ENCODE measurements at regions of chr6 and their contacts with region 1.

Region 1: GRCh38 chr6:117840541-117840983 is 66.5 kb upstream of the SLC35F1 start:
- DNase-seq: no peak
- ATAC-seq: 0 out of 2 replicates have a peak, but pooled peaks have one; percentile 66
- H3K4me3 ChIP-seq: no peak overlapping the region
- H3K27ac ChIP-seq: no peak overlapping the region
- H3K4me1 ChIP-seq: no peaks in the 10 kb centered on the region
- H3K27me3 ChIP-seq: no peaks in the 10 kb centered on the region
- CTCF ChIP-seq: peak; percentile 57

Region 2: GRCh38 chr6:118263921-118264486 is 423.4 kb after region 1 on chr6:
- CTCF ChIA-PET with region 1: no interaction called
- POLR2A ChIA-PET with region 1: no interaction called
- in situ Hi-C with region 1: no loop called
- intact Hi-C with region 1: loop called (anchors 2 kb)
- DNase-seq: no peak
- ATAC-seq: 0 out of 2 replicates have a peak, but pooled peaks have one; percentile 81
- H3K4me3 ChIP-seq: no peak overlapping the region
- H3K27ac ChIP-seq: no peak overlapping the region
- H3K4me1 ChIP-seq: no peaks in the 10 kb centered on the region
- H3K27me3 ChIP-seq: no peaks in the 10 kb centered on the region
- CTCF ChIP-seq: peak; percentile 65

Region 3: DNA sequence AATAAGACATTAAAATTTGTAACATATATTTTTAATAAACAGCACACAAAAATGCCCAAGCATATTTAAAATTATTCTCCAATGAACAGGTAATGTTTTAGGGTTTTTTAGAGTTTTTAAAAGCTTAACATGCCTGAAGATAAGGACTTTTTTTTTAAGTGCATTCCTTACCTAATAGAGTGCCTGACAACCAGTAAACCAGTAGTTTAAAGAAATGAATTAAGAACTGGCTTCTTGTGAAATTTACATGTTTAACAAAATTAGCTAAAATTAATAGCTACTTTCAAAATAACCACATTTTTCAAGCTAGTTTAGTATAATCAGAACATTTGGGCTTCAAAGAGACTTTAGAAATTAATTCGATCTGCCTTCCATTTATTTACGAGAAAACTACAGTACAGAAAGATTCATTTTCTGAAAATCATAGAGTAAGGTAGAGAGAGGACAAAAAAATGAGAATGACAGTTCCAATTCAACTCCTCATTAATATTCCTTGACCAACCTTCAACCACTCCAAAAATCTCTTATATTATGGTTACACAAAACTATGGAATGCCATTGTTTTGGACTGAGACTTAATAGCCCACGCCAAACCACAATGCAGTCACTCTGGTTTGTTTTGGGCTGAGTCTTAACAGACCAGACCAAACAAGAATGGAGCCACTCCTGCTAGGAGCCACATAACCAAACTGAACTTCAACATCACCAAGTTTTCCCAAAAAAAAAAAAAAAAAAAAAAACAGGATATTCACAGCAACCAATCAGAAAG is 701.8 kb after region 1 on chr6:
- CTCF ChIA-PET with region 1: no interaction called
- POLR2A ChIA-PET with region 1: no interaction called
- in situ Hi-C with region 1: no loop called
- intact Hi-C with region 1: loop called (anchors 10 kb)
- DNase-seq: no peak
- ATAC-seq: no peak
- H3K4me3 ChIP-seq: no peak overlapping the region
- H3K27ac ChIP-seq: no peak overlapping the region
- H3K4me1 ChIP-seq: no peaks in the 10 kb centered on the region
- H3K27me3 ChIP-seq: no peaks in the 10 kb centered on the region
- CTCF ChIP-seq: no peak

Measured in Panc1 (cell line).